ENCODE measurements at regions of chr22 and their contacts with region 1.

Region 1: DNA sequence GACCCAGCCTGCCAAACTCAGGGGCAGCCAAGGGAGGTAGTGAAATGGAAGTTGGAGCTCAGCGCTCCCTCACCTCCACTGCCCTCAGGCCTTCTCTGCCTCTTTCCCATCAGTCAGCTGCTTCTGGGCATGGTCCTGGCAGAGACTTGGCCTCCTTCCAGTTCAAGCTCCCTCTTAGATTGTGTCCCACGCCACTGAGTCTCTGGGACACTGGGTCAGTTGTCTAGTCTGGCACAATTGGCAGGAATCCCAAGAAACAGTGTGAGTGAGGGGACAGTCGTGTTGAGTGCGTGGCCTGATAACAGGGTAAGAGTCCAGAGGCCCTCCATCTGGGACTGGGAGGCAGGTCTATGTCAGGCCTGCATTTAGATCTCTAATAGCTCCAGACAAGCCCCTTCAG is 7.1 kb upstream of the SLC35E4 start:
- DNase-seq: no peak
- H3K4me3 ChIP-seq: no peak overlapping the region
- H3K27ac ChIP-seq: no peak overlapping the region
- H3K4me1 ChIP-seq: no peaks in the 10 kb centered on the region
- H3K27me3 ChIP-seq: no peaks in the 10 kb centered on the region
- CTCF ChIP-seq: no peak
- EP300 ChIP-seq: no peak
- POLR2A ChIP-seq: no peak

Region 2: DNA sequence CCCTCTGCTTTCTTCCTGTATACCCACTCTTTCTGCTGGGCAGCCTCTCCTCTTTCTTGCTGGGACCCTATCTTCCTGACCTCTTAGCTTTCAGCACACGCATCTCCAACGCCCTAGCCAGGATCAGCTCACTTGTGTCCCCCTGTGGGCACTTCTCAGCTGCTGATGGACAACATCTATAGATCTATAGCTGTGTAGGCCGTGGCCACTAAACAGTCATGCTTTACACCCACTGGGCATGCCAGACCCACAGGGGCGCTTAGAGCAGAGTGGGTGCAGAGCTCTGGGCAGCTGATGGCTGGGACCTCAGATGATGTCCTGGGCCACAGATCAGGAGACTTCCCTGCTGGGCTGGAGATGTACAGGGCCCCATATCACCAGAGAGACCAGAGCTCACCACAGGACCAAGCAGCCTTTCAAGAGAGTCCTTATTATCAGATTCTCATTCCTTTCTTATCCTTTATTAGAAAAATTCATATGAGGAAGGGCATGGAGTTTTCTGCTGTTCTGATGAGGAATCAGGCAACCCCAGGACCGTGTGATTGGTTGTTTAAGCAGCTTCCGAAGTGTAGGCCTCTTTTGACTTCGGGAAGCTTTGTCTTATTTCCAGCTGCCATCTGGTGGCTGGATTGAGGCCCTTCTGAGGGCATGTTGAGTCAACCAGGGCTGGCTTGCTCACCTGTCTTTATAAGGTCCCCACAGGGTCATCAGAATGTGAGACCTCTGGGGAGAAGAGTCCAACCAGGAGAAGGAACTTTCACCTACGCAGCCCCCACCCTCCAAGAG is 126.7 kb after region 1 on chr22:
- intact Hi-C with region 1: loop called in 2 of 4 experiments (anchors 10 kb)
- DNase-seq: peak in 4 of 5 donors; percentile 19 to 48 (median 32)
- H3K4me3 ChIP-seq: no peak overlapping the region
- H3K27ac ChIP-seq: no peak overlapping the region
- H3K4me1 ChIP-seq: no peaks in the 10 kb centered on the region
- H3K27me3 ChIP-seq: no peaks in the 10 kb centered on the region
- CTCF ChIP-seq: peak in 1 of 3 donors; percentile 19
- EP300 ChIP-seq: no peak
- POLR2A ChIP-seq: no peak

Measured in ovary (tissue), 10 donors.